Colonic mucosa (tissue), 4 donors: ENCODE measurements at regions of chr15 and their contacts with region 1.

Region 1: DNA sequence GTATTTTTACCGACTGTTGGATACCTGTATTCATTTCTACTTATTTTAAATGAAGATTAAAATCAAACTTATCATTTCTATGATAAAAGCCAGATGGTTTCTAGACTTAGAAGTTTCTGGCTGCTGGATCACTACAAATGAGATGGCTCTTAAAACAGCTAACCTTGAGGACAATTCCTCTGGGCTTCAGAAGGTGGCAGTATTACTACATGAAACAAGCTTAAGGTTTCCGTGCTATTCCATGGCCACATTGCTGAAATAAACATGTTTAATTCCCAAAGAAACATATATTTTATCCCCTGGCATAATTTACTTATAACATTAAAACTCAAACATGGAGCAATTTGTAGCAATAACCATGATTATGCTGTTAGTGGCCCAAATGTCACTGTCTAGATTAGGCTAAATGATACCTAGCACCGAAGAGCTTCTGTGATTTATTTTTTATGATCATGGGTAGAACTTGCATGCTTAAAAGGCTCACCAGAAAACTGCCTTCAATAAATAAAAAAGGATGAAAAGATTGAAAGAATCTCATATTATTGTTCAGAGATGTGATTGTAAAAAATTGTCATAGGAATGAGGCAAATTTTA is 204.0 kb upstream of the NANOGP8 start:
- DNase-seq: no peak
- H3K4me3 ChIP-seq: no peak overlapping the region
- H3K27ac ChIP-seq: no peak overlapping the region
- H3K4me1 ChIP-seq: no peaks in the 10 kb centered on the region
- H3K27me3 ChIP-seq: no peaks in the 10 kb centered on the region
- CTCF ChIP-seq: peak; percentile 56

Region 2: GRCh38 chr15:35078221-35078915 is 210.8 kb before region 1 on chr15:
- intact Hi-C with region 1: loop called (anchors 10 kb)
- DNase-seq: no peak
- H3K4me3 ChIP-seq: no peak overlapping the region
- H3K27ac ChIP-seq: no peak overlapping the region
- H3K4me1 ChIP-seq: no peaks in the 10 kb centered on the region
- H3K27me3 ChIP-seq: no peaks in the 10 kb centered on the region
- CTCF ChIP-seq: peak; percentile 80

Region 3: GRCh38 chr15:35229085-35229484 is 60.0 kb before region 1 on chr15:
- intact Hi-C with region 1: no loop called
- DNase-seq: no peak
- H3K4me3 ChIP-seq: no peak overlapping the region
- H3K27ac ChIP-seq: no peak overlapping the region
- H3K4me1 ChIP-seq: no peaks in the 10 kb centered on the region
- H3K27me3 ChIP-seq: no peaks in the 10 kb centered on the region
- CTCF ChIP-seq: no peak

Region 4: GRCh38 chr15:35256551-35256950 is 32.6 kb before region 1 on chr15:
- intact Hi-C with region 1: no loop called
- DNase-seq: no peak
- H3K4me3 ChIP-seq: no peak overlapping the region
- H3K27ac ChIP-seq: no peak overlapping the region
- H3K4me1 ChIP-seq: no peaks in the 10 kb centered on the region
- H3K27me3 ChIP-seq: no peaks in the 10 kb centered on the region
- CTCF ChIP-seq: no peak

Region 5: DNA sequence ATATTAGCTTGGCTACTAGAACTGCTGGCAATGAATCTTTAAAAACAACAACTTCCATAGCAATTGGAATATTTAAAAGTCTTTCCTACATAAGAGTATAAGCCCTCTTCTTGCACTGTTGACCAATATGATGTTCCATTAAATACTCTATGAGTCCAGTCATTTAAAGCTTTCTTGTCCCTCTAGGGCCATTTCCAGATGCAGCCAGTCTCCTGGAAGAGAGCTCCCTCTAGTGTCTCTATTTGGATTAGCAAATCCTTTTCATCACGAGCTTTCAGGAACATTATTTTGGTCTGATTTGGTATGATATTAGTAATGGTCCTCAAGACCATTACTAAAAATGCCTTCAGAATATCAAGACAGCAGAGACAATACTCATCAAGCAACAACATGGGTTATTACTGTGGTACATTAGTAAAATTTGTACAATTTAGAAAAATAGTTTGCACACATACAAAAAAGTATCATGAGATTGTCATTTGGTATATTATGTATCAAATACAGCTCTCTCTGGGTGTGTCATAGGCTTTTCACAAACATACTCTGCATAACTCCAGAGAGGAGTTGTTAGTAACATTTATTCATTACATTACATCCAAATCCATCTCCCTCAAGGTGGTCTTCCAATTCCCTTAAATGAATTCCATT is 155.6 kb after region 1 on chr15:
- intact Hi-C with region 1: loop called (anchors 2 kb)
- DNase-seq: no peak
- H3K4me3 ChIP-seq: no peak overlapping the region
- H3K27ac ChIP-seq: no peak overlapping the region
- H3K4me1 ChIP-seq: no peaks in the 10 kb centered on the region
- H3K27me3 ChIP-seq: no peaks in the 10 kb centered on the region
- CTCF ChIP-seq: peak; percentile 89